ENCODE measurements at regions of chr22 and their contacts with region 1.

Region 1: DNA sequence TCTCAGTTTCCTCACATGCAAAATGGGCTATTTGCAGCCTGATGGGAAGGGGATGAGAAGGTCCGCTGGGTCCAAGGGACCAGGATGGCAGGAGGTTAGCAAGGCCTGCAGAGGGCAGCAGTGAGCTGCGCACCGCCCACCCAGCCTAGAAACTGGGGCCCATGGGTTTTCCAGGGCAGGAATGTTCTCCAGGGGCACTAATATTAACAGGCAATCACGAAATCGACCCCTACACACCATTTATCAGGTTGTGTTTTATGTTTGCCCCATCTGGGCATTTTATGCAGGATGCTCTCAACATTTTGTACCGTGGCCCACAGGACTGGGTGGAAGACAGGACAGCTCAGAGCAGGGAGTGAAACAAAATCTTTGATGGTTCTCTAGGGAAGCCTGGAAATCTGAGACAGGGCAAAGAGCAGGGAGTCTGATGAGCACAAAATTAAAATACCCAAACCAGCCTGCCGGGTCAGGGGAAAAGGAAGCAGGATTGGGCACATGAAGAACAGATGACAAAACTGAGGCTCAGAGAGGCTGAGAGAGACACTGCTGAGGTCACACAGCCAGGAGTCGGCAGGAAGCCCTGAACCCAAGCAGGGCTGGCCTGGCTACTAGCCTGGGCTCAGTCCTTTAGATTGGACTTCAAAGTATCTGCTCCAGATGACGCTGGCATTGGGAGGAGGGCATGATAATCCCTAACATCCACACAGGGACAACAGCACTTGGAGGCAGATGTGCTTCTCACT is 1.6 kb upstream of the BCR start:
- DNase-seq: peak; percentile 66
- ATAC-seq: no peak
- H3K4me3 Mint-ChIP-seq: peak overlapping the region; percentile 29
- H3K27ac Mint-ChIP-seq: no peak overlapping the region
- H3K4me1 Mint-ChIP-seq: peaks cover 65% of the 10 kb centered on the region
- H3K27me3 Mint-ChIP-seq: peaks cover 4% of the 10 kb centered on the region

Region 2: DNA sequence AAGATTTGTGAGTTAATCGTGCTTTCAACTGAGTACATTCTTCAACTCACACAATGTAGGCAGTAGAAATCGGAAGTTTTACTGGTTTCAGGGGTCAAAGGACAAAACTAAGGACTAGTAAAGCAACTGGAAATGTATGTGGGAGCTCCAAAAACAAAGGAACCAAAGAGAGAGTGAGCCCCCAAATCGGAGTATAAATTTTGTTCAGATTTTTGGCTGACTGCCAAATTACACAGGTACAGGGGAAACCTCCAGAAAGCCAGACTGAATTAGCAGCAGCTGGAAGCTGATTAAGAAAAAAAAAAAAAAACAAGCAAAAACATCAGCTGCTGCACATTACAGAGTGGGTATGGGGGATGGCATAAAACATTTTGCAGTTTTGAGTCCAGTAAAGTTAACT is 183.5 kb before region 1 on chr22:
- CTCF ChIA-PET with region 1: no interaction called
- DNase-seq: no peak
- ATAC-seq: no peak
- H3K4me3 Mint-ChIP-seq: no peak overlapping the region
- H3K27ac Mint-ChIP-seq: no peak overlapping the region
- H3K4me1 Mint-ChIP-seq: no peaks in the 10 kb centered on the region
- H3K27me3 Mint-ChIP-seq: peaks cover 59% of the 10 kb centered on the region

Region 3: DNA sequence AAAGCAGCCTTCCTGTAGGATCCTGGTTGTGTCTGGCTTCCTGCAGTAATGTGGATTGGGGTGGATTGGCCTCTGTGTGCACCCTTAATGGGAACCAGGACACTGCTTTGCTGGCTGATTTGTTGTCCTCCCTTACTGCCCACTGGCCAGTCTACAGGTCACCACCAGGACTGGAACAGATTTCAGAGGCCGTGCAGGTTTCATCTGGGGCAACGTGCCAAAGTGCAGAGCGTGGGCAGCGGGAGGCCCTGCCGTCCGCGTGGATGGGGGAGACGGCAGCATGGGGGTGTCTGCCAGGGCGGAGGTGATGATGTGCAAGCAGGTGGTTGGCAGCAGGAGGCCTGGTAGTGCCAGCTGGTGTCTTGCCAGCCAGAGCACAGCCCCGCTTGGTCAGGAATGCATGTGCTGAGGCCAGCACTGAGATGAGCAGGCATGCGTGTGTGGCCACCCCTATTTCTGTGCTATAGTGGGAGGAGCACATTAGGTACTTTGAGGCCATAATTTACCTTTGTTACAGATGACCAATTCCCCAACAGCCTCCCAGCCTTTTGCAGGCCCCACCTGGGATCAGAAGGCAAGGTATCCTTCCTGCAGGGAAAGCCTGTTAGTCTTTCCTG is 26.0 kb after region 1 on chr22:
- CTCF ChIA-PET with region 1: no interaction called
- DNase-seq: no peak
- ATAC-seq: no peak
- H3K4me3 Mint-ChIP-seq: no peak overlapping the region
- H3K27ac Mint-ChIP-seq: no peak overlapping the region
- H3K4me1 Mint-ChIP-seq: no peaks in the 10 kb centered on the region
- H3K27me3 Mint-ChIP-seq: no peaks in the 10 kb centered on the region

Region 4: GRCh38 chr22:23240639-23241389 is 62.1 kb after region 1 on chr22:
- CTCF ChIA-PET with region 1: interaction called, 18 read pairs
- DNase-seq: no peak
- ATAC-seq: no peak
- H3K4me3 Mint-ChIP-seq: no peak overlapping the region
- H3K27ac Mint-ChIP-seq: no peak overlapping the region
- H3K4me1 Mint-ChIP-seq: peaks cover 63% of the 10 kb centered on the region
- H3K27me3 Mint-ChIP-seq: no peaks in the 10 kb centered on the region

Region 5: DNA sequence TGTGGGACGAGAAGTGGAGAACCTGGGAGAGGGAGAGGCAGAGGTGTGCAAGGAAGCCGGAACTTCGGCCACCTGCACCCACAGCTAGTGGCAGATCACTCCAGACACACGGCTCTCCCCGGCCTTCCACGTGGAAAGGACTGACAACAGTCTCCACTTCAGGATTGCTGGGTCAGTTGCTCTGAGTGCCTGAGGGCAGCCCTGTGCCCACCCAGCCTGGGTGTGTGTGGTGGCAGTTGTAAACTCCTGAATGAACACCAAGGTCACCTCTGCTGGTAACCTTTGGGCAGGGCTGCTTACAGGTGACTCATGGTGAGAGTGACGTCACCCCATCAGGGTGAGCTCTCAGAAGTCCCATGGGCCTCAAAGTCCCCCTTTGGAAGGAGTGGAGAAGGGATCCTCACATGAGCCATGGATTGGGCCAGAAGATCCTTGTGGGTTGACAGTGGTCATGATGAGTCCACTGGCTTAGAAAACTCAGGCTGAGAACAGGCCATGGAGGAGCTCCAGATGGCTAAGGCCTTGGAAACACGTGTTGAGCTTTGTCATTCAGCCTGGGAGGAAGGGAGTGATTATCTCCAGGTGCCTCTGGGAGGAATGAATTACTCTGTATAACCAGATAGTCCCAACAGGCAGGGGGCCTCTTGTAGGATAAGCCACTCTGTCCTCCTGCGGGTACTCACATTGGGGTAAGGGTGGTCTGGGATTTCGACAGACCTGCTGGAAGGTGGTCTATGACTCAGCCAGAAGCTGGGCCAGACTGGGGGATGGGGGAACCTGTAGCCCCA is 73.0 kb after region 1 on chr22:
- CTCF ChIA-PET with region 1: interaction called, 10 read pairs
- DNase-seq: no peak
- ATAC-seq: peak; percentile 57
- H3K4me3 Mint-ChIP-seq: no peak overlapping the region
- H3K27ac Mint-ChIP-seq: no peak overlapping the region
- H3K4me1 Mint-ChIP-seq: peaks cover 33% of the 10 kb centered on the region
- H3K27me3 Mint-ChIP-seq: no peaks in the 10 kb centered on the region

Region 6: DNA sequence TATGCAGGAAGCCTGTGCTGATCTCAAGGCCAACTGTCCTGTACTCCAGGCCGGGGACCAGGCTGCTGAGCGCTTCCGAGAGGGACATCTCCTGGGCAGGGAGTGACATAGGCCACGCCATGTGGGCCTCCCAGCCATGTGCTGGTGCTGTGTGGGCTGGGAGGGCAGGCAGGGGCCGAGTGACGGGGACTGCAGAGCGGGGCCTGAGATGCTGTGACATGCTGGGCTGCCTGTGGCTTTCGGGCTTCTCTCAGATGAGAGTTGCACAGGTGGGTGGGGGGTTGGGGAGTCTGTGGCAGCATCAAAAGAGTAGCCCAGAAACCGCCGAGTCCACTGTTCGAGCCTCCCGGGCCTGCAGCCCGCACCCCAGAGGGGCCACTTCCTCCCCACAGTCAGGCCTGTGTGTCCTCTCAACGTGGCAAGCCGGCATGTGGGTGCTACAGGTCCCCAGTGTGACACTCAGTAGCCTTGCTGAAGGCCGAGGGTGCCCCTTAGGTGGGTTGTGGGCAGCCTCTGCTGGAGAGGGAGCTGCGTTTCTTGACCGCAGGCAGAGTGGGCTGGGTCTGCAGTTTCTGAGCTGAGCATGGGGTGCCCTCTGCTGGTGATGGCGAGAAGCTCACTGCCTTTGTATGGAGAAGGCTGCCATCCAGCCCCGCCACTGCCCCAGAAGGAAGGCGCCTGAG is 102.9 kb after region 1 on chr22:
- CTCF ChIA-PET with region 1: interaction called, 300 read pairs
- DNase-seq: peak; percentile 89
- ATAC-seq: peak; percentile 77
- H3K4me3 Mint-ChIP-seq: no peak overlapping the region
- H3K27ac Mint-ChIP-seq: peak overlapping the region; percentile 28
- H3K4me1 Mint-ChIP-seq: peaks cover 34% of the 10 kb centered on the region
- H3K27me3 Mint-ChIP-seq: no peaks in the 10 kb centered on the region

Region 7: DNA sequence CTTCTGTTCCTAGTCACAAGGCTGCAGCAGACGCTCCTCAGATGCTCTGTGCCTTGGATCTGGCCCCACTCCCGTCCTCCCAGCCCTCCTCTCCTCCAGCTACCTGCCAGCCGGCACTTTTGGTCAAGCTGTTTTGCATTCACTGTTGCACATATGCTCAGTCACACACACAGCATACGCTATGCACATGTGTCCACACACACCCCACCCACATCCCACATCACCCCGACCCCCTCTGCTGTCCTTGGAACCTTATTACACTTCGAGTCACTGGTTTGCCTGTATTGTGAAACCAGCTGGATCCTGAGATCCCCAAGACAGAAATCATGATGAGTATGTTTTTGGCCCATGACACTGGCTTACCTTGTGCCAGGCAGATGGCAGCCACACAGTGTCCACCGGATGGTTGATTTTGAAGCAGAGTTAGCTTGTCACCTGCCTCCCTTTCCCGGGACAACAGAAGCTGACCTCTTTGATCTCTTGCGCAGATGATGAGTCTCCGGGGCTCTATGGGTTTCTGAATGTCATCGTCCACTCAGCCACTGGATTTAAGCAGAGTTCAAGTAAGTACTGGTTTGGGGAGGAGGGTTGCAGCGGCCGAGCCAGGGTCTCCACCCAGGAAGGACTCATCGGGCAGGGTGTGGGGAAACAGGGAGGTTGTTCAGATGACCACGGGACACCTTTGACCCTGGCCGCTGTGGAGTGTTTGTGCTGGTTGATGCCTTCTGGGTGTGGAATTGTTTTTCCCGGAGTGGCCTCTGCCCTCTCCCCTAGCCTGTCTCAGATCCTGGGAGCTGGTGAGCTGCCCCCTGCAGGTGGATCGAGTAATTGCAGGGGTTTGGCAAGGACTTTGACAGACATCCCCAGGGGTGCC is 111.4 kb after region 1 on chr22:
- CTCF ChIA-PET with region 1: interaction called, 300 read pairs
- DNase-seq: peak; percentile 63
- ATAC-seq: peak; percentile 46
- H3K4me3 Mint-ChIP-seq: no peak overlapping the region
- H3K27ac Mint-ChIP-seq: no peak overlapping the region
- H3K4me1 Mint-ChIP-seq: no peaks in the 10 kb centered on the region
- H3K27me3 Mint-ChIP-seq: no peaks in the 10 kb centered on the region

Region 8: DNA sequence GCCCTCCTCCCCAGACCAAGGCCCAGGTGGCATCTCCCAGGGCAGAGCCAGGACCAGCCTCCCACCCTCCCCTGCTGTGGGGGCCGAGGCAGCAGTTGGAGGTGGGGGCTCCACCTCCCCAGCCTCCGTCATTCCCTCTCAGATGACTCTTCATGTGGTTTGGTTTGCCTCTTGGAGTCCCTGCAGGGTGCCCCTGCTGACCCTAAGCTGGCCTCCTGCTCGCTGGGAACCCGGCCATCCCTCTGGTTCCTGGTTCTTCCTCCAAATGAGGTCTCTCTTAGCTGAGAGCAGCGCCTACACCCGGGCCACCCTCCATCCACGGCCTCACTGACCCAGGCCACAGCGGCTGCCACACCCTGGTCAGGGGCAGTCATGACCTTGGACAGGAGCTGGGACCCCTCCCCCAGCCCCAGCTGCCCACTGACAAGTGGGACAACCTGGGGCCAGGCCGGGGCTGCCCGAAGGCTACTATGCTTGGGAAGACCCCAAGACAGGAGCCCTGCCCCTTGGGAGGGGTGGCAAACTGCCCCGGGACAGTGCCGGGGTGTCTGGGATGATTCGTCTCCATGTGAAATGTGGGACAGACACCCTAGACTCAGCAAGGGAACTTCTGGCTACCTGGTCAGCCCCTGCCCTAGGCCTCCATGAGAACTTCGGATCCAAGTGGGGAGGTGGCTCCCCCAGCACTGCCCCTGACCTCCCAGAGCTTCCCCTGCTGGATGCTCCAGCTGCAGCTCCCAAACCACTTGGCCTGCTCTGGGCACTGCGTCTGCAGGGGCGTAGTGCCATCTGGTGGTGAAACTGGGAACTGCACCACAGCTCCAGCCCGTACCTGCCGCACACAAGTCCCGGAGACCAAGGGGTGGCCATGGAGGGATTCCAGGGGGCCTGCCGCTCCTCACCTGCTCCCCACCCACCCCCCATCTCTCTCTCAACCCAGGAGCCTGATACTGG is 206.9 kb after region 1 on chr22:
- CTCF ChIA-PET with region 1: interaction called, 21 read pairs
- DNase-seq: peak; percentile 83
- ATAC-seq: peak; percentile 88
- H3K4me3 Mint-ChIP-seq: no peak overlapping the region
- H3K27ac Mint-ChIP-seq: no peak overlapping the region
- H3K4me1 Mint-ChIP-seq: no peaks in the 10 kb centered on the region
- H3K27me3 Mint-ChIP-seq: no peaks in the 10 kb centered on the region

Measured in activated CD8-positive, alpha-beta memory T cell treated with anti-CD3 and anti-CD28 coated beads, Interleukin-2, amount 10 ng/mL, durations not matched to agents 7 days and 5 days (primary cell).